Dorsolateral prefrontal cortex (tissue), 120 donors: ENCODE measurements at regions of chr13 and their contacts with region 1.

Region 1: GRCh38 chr13:41468055-41468454 is 10.7 kb downstream of the RGCC start:
- DNase-seq: no peak
- H3K4me3 ChIP-seq: peak overlapping the region in 21 of 59 donors; percentile 0 to 96 (median 23)
- H3K27ac ChIP-seq: peak overlapping the region; percentile 31 to 96 (median 88)
- H3K27me3 ChIP-seq: no peaks in the 10 kb centered on the region
- CTCF ChIP-seq: no peak

Region 2: DNA sequence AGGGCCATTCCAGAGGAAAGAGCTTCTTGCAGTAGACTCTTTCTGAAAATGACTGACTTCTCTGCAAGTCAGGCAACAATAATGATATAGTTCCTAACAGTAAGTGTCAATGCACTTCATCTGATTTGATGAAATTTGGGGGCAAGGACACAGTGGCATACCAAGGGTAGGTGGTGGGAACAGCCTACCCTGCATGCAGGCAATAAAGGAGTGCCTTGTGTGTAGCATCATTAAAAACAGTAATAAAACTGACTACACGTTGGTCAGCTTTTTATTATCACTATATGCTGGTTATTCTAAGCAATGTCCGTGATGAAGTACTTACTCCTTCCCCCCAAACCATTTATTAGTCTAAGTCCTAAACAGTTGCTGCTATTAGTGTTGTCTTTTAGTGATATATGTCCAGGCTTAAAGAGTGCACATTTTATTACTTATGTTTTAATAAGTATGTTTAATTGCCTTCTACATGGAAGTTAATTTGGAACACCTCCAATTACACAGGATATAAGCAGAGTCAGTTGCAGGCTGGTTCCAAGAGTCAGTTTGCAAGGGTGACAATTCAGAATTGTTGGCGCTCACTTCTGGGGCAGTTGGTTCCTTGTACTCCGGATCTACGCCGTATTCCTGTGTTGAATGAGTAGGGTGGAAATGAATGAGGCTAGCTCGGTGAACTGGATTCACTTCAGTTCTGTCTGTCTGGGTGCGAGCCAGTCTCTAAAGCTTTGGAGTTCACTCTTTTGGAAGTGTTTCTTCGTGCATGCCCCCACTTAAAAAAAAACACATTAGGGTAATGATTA is 73.3 kb after region 1 on chr13:
- intact Hi-C with region 1: loop called in 1 of 2 experiments (anchors 2 kb)
- DNase-seq: no peak
- H3K4me3 ChIP-seq: no peak overlapping the region
- H3K27ac ChIP-seq: peak overlapping the region in 7 of 59 donors; percentile 0 to 52 (median 22)
- H3K27me3 ChIP-seq: no peaks in the 10 kb centered on the region
- CTCF ChIP-seq: no peak

Region 3: GRCh38 chr13:41613984-41614661 is 146.1 kb after region 1 on chr13:
- intact Hi-C with region 1: no loop called
- DNase-seq: peak in 4 of 10 donors; percentile 15 to 47 (median 46)
- H3K4me3 ChIP-seq: no peak overlapping the region
- H3K27ac ChIP-seq: peak overlapping the region in 46 of 59 donors; percentile 1 to 76 (median 56)
- H3K27me3 ChIP-seq: no peaks in the 10 kb centered on the region
- CTCF ChIP-seq: peak in 1 of 56 donors; percentile 11

Region 4: GRCh38 chr13:42266473-42266872 is 798.4 kb after region 1 on chr13:
- intact Hi-C with region 1: no loop called
- DNase-seq: no peak
- H3K4me3 ChIP-seq: no peak overlapping the region
- H3K27ac ChIP-seq: no peak overlapping the region
- H3K27me3 ChIP-seq: peaks cover 0 to 7% (median 0%) of the 10 kb centered on the region in 45 donors
- CTCF ChIP-seq: no peak